MCF 10A (cell line): ENCODE measurements at regions of chr1 and their contacts with region 1.

Region 1: DNA sequence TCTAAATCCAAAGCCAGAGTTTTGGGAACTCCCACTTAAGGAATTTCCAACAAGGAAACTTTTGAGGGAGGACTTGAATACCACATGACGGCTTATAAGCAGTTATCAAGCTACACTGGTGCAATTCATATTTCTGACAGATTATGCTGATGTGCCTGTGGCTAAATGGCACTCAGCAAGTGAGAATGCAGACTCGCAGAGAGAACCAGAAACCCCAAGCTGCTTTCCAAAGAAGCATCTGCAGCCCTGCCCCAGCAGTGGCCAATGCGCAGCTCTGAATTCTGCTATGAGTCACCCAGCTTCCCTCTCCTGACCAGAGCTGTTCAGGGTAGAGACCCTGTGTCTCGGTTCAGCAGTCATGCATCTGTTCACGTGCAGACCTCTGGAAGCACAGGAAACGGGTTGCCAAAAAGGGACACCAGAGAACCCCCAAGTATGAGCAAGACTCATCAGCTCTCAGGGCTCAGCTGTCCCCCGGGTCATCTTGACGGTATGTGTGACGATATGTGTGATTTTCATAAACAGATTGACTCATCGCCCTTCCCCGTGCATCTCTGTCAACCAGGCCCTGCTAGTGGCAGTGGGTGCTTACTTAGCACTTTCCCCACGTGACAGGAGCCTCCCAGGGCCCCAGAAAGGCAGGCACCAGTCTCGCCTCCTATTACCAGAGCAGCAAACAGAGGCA is 76.3 kb downstream of the ITPKB start:
- DNase-seq: peak; percentile 95
- H3K4me3 Mint-ChIP-seq: peak overlapping the region; percentile 65
- H3K27ac Mint-ChIP-seq: peak overlapping the region; percentile 96
- H3K4me1 Mint-ChIP-seq: peaks cover 33% of the 10 kb centered on the region
- H3K27me3 Mint-ChIP-seq: no peaks in the 10 kb centered on the region
- CTCF ChIP-seq: no peak

Region 2: GRCh38 chr1:226589008-226589733 is 73.6 kb before region 1 on chr1:
- CTCF ChIA-PET with region 1: no interaction called
- POLR2A ChIA-PET with region 1: no interaction called
- intact Hi-C with region 1: no loop called
- DNase-seq: peak; percentile 32
- H3K4me3 Mint-ChIP-seq: no peak overlapping the region
- H3K27ac Mint-ChIP-seq: no peak overlapping the region
- H3K4me1 Mint-ChIP-seq: peaks cover 1% of the 10 kb centered on the region
- H3K27me3 Mint-ChIP-seq: peaks cover 19% of the 10 kb centered on the region
- CTCF ChIP-seq: no peak

Region 3: GRCh38 chr1:226679853-226680516 is 17.2 kb after region 1 on chr1:
- CTCF ChIA-PET with region 1: interaction called, 12 read pairs
- POLR2A ChIA-PET with region 1: interaction called, 47 read pairs
- intact Hi-C with region 1: no loop called
- DNase-seq: no peak
- H3K4me3 Mint-ChIP-seq: no peak overlapping the region
- H3K27ac Mint-ChIP-seq: no peak overlapping the region
- H3K4me1 Mint-ChIP-seq: peaks cover 24% of the 10 kb centered on the region
- H3K27me3 Mint-ChIP-seq: no peaks in the 10 kb centered on the region
- CTCF ChIP-seq: no peak

Region 4: DNA sequence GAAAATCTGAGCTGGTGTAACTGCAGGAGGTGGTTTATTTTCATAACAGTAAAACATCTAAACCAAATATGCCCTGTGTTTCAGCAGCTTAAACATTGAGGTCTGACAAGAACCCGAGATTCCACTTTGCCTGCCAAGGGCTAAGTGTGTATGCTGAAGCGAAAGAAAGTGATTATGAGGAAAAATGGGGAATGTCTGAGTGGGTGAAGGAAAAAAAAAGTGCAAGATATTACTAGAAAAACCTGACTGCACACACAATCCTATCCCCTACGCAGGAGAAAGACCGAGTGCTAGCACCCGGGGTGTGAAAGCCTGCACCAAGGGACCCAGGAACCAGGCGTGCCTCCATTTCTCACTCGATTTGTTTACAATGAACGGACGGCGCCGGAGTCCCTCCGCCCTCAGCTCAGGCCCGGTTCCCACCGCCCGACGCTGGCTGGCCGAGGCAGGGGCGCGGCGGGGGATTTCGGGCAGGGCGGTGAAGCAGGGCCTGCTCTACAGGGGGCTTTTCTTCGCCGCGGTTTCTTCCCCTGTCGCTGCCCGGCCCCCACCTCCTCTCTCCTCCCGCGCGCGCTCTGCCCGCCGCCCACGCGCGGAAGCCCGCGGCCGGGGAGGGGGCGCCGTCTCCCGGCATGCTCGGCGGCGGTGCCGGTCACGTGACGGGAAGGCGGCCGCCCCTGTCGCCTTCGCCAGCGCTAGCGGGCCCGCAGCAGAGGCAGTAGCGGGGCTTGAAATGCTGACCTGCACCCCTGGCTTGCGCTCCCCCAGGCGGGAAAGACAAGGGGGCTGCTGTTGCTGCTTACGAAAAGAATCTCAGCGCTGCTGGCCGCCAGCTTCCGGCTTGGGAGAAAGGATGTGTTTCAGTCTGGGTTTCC is 40.4 kb after region 1 on chr1:
- CTCF ChIA-PET with region 1: interaction called, 4 read pairs
- POLR2A ChIA-PET with region 1: interaction called, 29 read pairs
- intact Hi-C with region 1: loop called (anchors 5 kb)
- DNase-seq: peak; percentile 75
- H3K4me3 Mint-ChIP-seq: peak overlapping the region; percentile 62
- H3K27ac Mint-ChIP-seq: peak overlapping the region; percentile 9
- H3K4me1 Mint-ChIP-seq: peaks cover 14% of the 10 kb centered on the region
- H3K27me3 Mint-ChIP-seq: no peaks in the 10 kb centered on the region
- CTCF ChIP-seq: no peak

Region 5: DNA sequence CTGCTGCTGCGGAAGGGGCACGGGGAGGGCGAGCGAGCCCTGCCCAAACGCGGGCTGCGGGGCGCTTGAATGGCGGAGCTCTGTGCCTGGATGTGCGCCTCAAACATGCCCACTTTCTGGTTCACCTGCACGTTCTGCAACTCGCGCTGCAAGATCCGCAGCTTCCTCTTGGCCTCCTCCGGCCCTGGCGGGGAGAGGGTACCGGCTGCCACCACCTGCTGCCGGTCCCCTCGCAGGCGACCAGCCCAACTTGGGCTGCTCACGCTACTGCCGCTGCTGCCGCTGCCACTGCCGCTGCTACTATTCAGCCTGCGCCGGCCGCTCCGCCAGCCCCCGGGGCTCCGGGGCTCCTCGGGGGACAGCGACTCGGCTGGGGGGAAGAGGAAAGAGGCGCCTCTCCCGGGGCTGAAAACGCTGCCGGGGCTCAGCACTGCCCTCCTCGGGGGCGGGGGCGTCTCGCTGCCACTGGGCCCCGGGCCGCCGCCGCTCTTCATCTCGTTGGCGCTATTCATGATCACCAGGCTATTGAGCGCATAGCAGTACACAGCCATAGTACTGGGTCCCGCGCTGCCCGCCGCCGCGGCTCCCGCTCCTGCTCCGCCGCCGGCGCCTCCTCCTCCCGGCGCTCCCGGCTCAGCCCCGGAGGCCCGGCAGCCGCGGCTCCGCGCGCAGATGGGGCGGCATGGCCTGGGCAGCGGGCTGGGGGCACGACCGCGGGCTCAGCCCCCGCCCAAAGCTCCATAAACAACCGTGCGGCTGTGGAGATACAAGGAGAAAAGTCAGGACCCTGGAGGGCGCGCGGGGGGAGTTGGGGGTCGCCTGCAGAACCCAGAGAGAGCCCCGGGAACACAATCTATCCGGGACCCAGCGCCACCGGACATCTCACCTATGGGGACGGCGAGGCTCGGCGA is 74.4 kb after region 1 on chr1:
- CTCF ChIA-PET with region 1: interaction called, 3 read pairs
- POLR2A ChIA-PET with region 1: interaction called, 17 read pairs
- intact Hi-C with region 1: loop called (anchors 2 kb)
- DNase-seq: no peak
- H3K4me3 Mint-ChIP-seq: peak overlapping the region; percentile 82
- H3K27ac Mint-ChIP-seq: peak overlapping the region; percentile 33
- H3K4me1 Mint-ChIP-seq: peaks cover 28% of the 10 kb centered on the region
- H3K27me3 Mint-ChIP-seq: no peaks in the 10 kb centered on the region
- CTCF ChIP-seq: no peak

Region 6: DNA sequence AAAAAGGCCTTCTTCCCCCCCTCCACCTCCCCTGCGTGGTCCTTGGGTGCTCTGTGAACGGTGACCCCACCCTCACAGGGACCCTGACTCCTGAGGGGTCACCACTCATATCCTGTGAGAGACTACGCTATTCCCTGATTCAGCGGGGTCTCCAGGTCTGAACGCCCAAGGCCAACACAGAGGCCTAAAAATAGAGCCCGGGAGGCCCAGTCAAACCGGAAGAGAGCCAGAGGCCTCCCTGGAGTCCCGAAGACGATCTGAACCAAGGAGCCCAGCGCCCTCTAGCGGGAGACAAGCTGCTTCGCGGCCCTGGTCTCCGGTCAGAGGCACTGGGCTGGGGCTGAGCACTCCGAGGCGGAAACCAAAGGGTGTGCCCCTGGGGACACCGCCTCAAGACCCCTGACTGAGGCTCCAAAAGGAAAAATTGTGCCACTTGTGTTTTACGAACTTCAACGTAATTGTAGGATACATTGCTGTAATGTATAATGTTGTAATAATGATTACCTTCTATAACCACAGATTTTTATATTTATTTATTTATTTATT is 165.3 kb after region 1 on chr1:
- CTCF ChIA-PET with region 1: interaction called, 10 read pairs
- POLR2A ChIA-PET with region 1: interaction called, 5 read pairs
- intact Hi-C with region 1: no loop called
- DNase-seq: peak; percentile 100
- H3K4me3 Mint-ChIP-seq: no peak overlapping the region
- H3K27ac Mint-ChIP-seq: no peak overlapping the region
- H3K4me1 Mint-ChIP-seq: no peaks in the 10 kb centered on the region
- H3K27me3 Mint-ChIP-seq: no peaks in the 10 kb centered on the region
- CTCF ChIP-seq: peak; percentile 100